Cardiac septum (tissue), 1 donor: ENCODE measurements at regions of chr12 and their contacts with region 1.

Region 1: DNA sequence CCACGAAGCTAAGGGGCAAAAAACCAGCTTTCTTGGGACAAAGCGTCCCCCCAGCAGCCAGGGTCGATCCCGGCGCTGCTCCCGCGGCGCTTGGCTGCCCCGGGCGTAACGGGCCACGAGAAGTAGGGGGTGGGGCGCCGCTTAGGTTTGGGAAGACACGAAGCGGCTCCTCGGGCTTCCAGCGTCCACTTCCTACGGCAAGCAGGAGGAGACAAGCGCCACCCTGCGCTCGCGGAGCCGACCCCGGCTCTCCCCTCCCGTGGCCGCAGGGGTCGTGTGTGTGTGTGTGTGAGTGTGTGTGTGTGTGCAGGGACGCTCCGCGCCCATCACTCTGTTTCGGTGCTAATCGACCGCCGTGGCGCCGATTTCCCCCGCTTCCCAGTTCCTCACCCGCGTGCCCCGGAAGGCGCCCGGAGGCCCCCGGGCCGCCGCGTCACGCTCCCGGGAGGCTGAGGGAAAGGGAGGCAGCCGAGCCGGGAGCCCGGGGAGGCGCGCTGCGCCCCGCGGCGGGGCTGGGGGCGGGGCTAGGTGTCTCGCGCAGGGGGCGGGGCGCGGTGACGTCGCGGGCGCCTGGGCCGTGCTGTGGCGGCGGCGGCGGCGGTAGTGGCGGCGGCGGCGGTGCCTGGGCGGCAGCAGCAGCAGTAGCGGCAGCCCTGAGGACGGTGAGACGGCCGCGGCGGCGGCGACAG is at the start of gene ERC1:
- DNase-seq: peak; percentile 95
- total RNA-seq, gene ERC1: 56.9 TPM

Region 2: DNA sequence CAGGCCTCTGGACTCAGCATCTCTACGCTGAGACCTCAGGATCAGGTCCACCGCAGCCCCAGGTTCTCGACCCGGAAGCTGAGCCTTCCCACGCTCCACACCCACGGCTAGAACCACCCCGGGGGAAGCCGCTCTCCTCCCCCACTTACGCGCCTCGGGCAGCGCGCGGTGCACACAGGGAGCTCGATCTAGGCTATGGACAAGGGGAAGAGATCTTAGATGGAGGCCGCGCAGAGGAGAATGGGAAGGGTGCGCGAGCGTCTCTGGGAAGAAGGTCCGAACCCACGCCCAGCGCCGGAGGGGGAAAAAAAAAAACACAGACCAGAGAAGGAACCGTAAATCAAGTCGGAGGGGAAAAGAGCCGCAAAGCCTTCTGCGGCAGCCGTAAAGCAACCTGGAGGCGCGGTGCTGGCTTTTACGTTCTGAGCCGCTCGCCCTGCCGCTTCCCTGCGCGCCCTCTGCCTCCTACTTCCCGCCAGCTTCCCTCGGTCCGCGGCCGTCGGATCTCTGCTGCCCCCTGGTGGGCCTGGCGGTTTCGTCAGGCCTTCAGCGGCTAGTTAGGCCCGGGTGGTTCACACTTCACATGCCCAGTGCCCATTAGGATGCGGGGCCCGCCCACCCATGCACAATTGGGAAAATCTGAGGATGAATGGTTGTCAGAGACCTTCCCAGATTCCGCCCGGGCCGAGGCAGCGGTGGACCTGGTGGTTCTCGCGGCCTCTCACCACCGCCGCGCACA is 41.2 kb before region 1 on chr12 and contains the start of gene RAD52:
- intact Hi-C with region 1: loop called (anchors 2 kb)
- DNase-seq: peak; percentile 99
- total RNA-seq, gene RAD52: 9.2 TPM

Region 3: GRCh38 chr12:1054117-1054870 is 63.5 kb after region 1 on chr12:
- intact Hi-C with region 1: loop called (anchors 10 kb)
- DNase-seq: no peak

Region 4: GRCh38 chr12:1093166-1093751 is 102.5 kb after region 1 on chr12:
- intact Hi-C with region 1: loop called (anchors 10 kb)
- DNase-seq: no peak

Region 5: DNA sequence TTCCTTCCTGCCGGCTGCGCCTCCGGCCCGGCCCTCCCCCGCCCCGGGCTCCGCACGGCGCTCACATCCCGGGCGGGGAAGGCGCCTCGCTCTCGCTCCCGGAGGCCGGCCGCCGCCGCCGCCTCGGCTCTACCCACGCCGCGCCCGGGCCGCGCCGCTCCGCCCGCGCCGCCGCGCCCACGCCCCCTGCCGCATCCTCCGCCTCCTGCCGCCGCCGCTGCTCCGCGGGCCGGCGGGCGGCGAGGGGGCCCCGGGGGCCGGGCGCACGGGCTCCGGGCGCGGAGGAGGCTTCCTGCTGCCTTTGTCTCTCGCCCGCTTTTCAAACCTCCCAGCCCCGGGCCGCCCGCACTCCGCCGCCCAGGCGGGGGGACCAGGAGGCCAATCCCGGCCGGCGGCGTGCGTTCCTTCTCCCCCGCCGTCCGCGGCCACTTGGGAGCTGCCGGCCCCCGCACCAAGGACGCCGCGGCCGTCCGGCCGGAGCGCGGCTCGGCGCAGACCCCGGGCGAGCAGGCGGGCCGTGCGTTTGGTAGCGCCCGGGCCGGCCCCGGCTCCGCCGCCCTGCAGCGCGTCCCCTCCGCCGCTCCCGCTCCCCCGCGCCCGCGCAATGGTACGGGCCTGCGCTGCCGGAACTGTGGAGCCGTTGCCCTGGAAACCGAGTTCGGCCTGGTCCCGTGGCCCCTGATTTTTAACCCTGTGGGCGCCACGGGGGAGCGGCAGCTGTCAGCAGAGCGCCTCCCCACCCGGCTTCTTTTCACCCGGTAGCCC is 603.6 kb after region 1 on chr12 and contains the start of gene FBXL14:
- intact Hi-C with region 1: loop called (anchors 5 kb)
- DNase-seq: peak; percentile 93
- total RNA-seq, gene FBXL14: 6.9 TPM